ENCODE measurements at regions of chr16 and their contacts with region 1.

Region 1: GRCh38 chr16:2838928-2839327 is 8.8 kb downstream of the ZG16B start:
- DNase-seq: peak; percentile 71 to 82
- H3K4me3 ChIP-seq: no peak overlapping the region
- H3K27ac ChIP-seq: no peak overlapping the region
- H3K4me1 ChIP-seq: peaks cover 0 to 11% (median 3%) of the 10 kb centered on the region in 4 experiments; a peak in 5 of 7 replicates
- H3K27me3 ChIP-seq: peaks cover 0 to 5% (median 2%) of the 10 kb centered on the region in 4 experiments; a peak in 4 of 7 replicates
- CTCF ChIP-seq: peak; percentile 97 to 100 (median 97)
- EP300 ChIP-seq: no peak
- POLR2A ChIP-seq: no peak
- RAD21 ChIP-seq: peak; percentile 92 to 95

Region 2: GRCh38 chr16:2429034-2429770 is 409.7 kb before region 1 on chr16 and contains the start of gene CCNF:
- CTCF ChIA-PET with region 1: no interaction called
- POLR2A ChIA-PET with region 1: no interaction called
- DNase-seq: peak; percentile 91 to 99
- H3K4me3 ChIP-seq: peak within 1 kb of the TSS; percentile 75 to 99 (median 83)
- H3K27ac ChIP-seq: peak within 1 kb of the TSS; percentile 43; the same call in 1 of the 2 replicates
- H3K4me1 ChIP-seq: peaks cover 0 to 13% (median 6%) of the 10 kb centered on the region in 4 experiments; a peak in 5 of 7 replicates
- H3K27me3 ChIP-seq: peaks cover 0 to 9% (median 2%) of the 10 kb centered on the region in 4 experiments; a peak in 2 of 7 replicates
- CTCF ChIP-seq: 0 out of 4 replicates have a peak, but pooled peaks of 1 of the 3 experiments have one; percentile 2
- EP300 ChIP-seq: no peak
- POLR2A ChIP-seq: no peak; a peak in 1 of 3 replicates
- RAD21 ChIP-seq: no peak; a peak in 1 of 4 replicates
- total RNA-seq, gene CCNF: 54.3 and 55.9 TPM in 2 replicates

Region 3: GRCh38 chr16:2821487-2822157 is 17.3 kb before region 1 on chr16:
- CTCF ChIA-PET with region 1: interaction called, 17 read pairs
- POLR2A ChIA-PET with region 1: interaction called, 3 read pairs
- DNase-seq: no peak
- H3K4me3 ChIP-seq: no peak overlapping the region
- H3K27ac ChIP-seq: no peak overlapping the region
- H3K4me1 ChIP-seq: peaks cover 0 to 4% (median 0%) of the 10 kb centered on the region in 4 experiments; a peak in 1 of 7 replicates
- H3K27me3 ChIP-seq: no peaks in the 10 kb centered on the region
- CTCF ChIP-seq: no peak
- EP300 ChIP-seq: no peak
- POLR2A ChIP-seq: no peak
- RAD21 ChIP-seq: no peak

Region 4: GRCh38 chr16:2860826-2861567 is 22.1 kb after region 1 on chr16:
- CTCF ChIA-PET with region 1: interaction called, 53 read pairs
- POLR2A ChIA-PET with region 1: interaction called, 4 read pairs
- DNase-seq: no peak
- H3K4me3 ChIP-seq: no peak overlapping the region
- H3K27ac ChIP-seq: no peak overlapping the region
- H3K4me1 ChIP-seq: peaks cover 3 to 12% (median 6%) of the 10 kb centered on the region in 4 experiments; a peak in 5 of 7 replicates
- H3K27me3 ChIP-seq: peaks cover 6 to 43% (median 24%) of the 10 kb centered on the region in 4 experiments
- CTCF ChIP-seq: no peak
- EP300 ChIP-seq: no peak
- POLR2A ChIP-seq: no peak
- RAD21 ChIP-seq: no peak

Region 5: DNA sequence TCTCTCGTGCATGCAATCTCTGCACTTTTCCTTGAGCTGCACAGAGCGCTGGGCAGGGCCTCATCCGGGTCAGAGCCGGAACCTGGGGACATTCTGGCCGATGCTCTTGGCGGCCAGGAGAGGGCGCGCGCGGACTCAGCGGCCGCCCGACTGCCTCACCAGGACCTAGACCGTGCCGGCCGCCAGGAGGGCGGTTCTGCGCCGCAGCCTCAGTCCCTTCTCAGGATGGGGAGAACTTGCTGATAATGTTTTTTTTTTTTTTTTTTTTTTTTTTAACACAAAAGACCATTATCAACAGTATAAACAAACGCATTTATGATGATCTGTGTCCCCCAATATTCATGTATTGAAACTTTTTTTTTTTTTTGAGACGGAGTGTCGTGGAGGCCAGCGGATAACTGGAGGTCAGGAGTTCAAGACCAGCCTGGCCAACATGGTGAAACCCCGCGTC is 36.0 kb after region 1 on chr16:
- CTCF ChIA-PET with region 1: interaction called, 90 read pairs
- POLR2A ChIA-PET with region 1: interaction called, 3 read pairs
- DNase-seq: peak in 1 of 2 experiments; percentile 76
- H3K4me3 ChIP-seq: no peak overlapping the region
- H3K27ac ChIP-seq: no peak overlapping the region
- H3K4me1 ChIP-seq: no peaks in the 10 kb centered on the region; a peak in 1 of 7 replicates
- H3K27me3 ChIP-seq: peaks cover 0 to 3% (median 2%) of the 10 kb centered on the region in 4 experiments; a peak in 4 of 7 replicates
- CTCF ChIP-seq: peak; percentile 92 to 98 (median 93)
- EP300 ChIP-seq: no peak
- POLR2A ChIP-seq: no peak
- RAD21 ChIP-seq: peak; percentile 62 to 75

Region 6: GRCh38 chr16:2911580-2912329 is 72.8 kb after region 1 on chr16 and contains the start of gene FLYWCH1:
- CTCF ChIA-PET with region 1: interaction called, 17 read pairs
- POLR2A ChIA-PET with region 1: interaction called, 3 read pairs
- DNase-seq: peak; percentile 96 to 99
- H3K4me3 ChIP-seq: peak within 1 kb of the TSS; percentile 61 to 87 (median 73)
- H3K27ac ChIP-seq: no peak within 1 kb of the TSS
- H3K4me1 ChIP-seq: peaks cover 0 to 6% (median 2%) of the 10 kb centered on the region in 4 experiments; a peak in 3 of 7 replicates
- H3K27me3 ChIP-seq: peaks cover 0 to 9% (median 8%) of the 10 kb centered on the region in 4 experiments; a peak in 5 of 7 replicates
- CTCF ChIP-seq: no peak
- EP300 ChIP-seq: 0 out of 3 replicates have a peak, but pooled peaks of 1 of the 2 experiments have one; percentile 15
- POLR2A ChIP-seq: 0 out of 3 replicates have a peak, but pooled peaks of 1 of the 2 experiments have one; percentile 28
- RAD21 ChIP-seq: no peak
- total RNA-seq, gene FLYWCH1: 23.1 and 23.5 TPM in 2 replicates

Region 7: DNA sequence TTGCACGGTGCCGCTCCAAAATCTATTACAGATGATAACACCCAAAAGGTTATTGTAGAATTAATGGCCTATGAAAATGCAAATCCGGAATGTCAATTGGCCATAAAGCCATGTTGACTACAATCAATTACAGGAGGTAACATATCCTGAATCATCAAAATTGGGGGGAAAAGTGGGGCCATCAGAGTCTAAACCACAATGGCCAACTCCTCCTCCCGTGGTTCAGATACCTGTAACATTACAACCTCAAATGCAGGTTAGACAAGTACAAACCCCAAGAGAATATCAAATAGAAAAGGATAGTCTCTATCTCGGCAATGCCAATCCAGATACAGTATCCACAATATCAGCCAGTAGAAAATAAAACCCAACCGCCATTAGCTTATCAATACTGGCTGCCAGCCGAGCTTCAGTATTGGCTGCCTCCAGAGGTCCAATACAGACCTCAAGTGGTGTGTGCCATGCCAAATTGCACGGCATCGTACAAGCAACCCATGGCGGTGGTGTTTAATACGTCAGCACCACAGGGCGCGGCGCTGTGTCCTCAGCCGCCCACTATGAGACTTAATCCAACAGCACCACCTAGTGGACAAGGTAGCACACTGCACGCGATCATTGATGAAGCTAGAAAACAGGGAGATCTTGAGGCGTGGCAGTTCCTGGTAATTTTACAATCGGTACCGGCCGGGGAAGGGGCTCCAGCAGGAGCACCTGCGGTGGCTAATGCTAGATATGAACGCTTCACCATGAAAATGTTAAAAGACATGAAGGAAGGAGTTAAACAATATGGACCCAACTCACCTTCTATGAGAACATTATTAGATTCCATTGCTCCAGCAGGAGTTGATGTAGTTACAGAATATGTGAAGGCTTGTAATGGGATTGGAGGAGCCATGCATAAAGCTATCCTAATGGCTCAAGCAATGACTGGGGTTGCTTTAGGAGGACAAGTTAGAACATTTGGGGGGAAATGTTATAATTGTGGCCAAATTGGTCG is 88.0 kb after region 1 on chr16:
- CTCF ChIA-PET with region 1: interaction called, 50 read pairs
- POLR2A ChIA-PET with region 1: interaction called, 3 read pairs
- DNase-seq: peak in 1 of 2 experiments; percentile 93
- H3K4me3 ChIP-seq: no peak overlapping the region
- H3K27ac ChIP-seq: no peak overlapping the region
- H3K4me1 ChIP-seq: peaks cover 4 to 15% (median 10%) of the 10 kb centered on the region in 4 experiments
- H3K27me3 ChIP-seq: no peaks in the 10 kb centered on the region
- CTCF ChIP-seq: peak; percentile 83 to 97 (median 96)
- EP300 ChIP-seq: no peak
- POLR2A ChIP-seq: no peak
- RAD21 ChIP-seq: peak; percentile 85 to 92

Measured in H1 (cell line).